H1 (cell line): ENCODE measurements at regions of chr5 and their contacts with region 1.

Region 1: DNA sequence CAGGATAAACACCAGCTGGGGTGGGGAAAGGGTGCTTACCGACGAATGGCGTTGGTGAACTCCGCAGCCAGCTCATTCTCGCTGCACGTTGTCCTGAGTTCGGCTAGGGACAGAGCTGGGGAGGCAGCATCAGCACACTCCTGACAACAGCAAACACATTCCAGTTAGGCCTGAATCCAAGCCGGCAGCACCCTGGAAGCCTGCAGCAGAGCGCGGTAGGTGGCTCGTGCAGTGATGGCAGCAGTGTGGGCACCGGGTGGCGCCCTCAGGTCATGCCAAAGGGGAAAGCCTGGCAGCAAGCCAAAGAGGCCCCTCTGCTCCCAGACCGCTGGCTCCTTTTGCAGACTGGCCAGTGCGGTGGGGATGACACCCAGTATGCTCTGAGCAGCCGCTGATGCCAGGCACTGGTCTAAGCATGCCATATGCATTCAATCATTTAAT is 66.9 kb downstream of the DCP2 start:
- DNase-seq: peak; percentile 41 to 79
- H3K4me3 ChIP-seq: no peak overlapping the region
- H3K27ac ChIP-seq: no peak overlapping the region
- H3K4me1 ChIP-seq: no peaks in the 10 kb centered on the region
- H3K27me3 ChIP-seq: no peaks in the 10 kb centered on the region
- CTCF ChIP-seq: peak; percentile 72 to 78 (median 78)
- EP300 ChIP-seq: no peak
- POLR2A ChIP-seq: no peak
- RAD21 ChIP-seq: peak; percentile 92 to 93

Region 2: DNA sequence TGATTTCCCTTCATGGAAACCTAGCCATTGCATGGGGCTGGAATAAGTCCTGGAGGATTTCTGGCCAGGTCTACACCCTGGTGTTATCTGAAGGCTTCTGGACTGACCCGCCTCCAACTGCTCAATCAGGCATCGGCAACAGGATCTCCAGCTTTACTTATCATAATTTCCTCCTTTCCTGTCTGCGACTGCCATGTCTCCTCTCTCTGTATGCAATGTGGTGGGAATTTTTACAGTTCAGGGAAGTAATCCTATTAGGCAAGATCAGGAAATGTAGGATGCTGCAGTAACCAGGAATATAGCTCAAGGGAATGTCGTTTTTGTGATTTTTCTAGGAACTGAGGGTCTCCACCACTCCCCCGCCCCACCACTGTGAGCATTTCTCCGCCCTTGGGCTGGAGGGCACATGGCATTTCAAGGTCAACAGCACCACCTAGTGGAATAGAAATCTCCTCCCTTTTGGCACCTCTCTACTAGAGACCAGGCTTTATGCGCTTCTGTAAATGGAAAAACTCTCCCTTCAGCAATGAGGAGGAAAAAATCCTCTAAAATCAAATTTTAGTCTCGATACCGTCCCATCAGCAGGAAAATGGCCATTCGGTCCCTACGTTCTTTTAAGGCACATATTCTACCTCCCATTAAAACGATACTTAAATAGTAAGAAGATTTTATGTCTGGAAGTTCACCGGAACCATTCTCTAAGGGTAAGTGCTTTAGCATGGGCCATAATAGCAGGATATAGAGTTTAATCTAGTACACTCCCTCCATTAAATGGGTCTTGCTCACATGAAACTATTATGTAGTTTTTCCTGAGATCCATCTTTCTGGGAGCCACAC is 563.0 kb after region 1 on chr5:
- CTCF ChIA-PET with region 1: interaction called, 12 read pairs
- POLR2A ChIA-PET with region 1: no interaction called
- DNase-seq: peak; percentile 23 to 73
- H3K4me3 ChIP-seq: no peak overlapping the region
- H3K27ac ChIP-seq: no peak overlapping the region
- H3K4me1 ChIP-seq: no peaks in the 10 kb centered on the region; a peak in 2 of 7 replicates
- H3K27me3 ChIP-seq: no peaks in the 10 kb centered on the region
- CTCF ChIP-seq: peak; percentile 49 to 86 (median 86)
- EP300 ChIP-seq: no peak
- POLR2A ChIP-seq: no peak
- RAD21 ChIP-seq: peak; percentile 97